CD4-positive, alpha-beta T cell (primary cell): ENCODE measurements at regions of chr4 and their contacts with region 1.

Region 1: GRCh38 chr4:76179398-76180318 is 31.5 kb upstream of the NUP54 start:
- DNase-seq: peak; percentile 71 to 89 (median 77)
- ATAC-seq: peak; percentile 92
- H3K4me3 ChIP-seq: no peak overlapping the region
- H3K4me3 Mint-ChIP-seq: no peak overlapping the region
- H3K27ac ChIP-seq: no peak overlapping the region
- H3K27ac Mint-ChIP-seq: no peak overlapping the region
- H3K4me1 ChIP-seq: no peaks in the 10 kb centered on the region
- H3K4me1 Mint-ChIP-seq: no peaks in the 10 kb centered on the region
- H3K27me3 ChIP-seq: no peaks in the 10 kb centered on the region
- H3K27me3 Mint-ChIP-seq: no peaks in the 10 kb centered on the region
- CTCF ChIP-seq: peak; percentile 94

Region 2: DNA sequence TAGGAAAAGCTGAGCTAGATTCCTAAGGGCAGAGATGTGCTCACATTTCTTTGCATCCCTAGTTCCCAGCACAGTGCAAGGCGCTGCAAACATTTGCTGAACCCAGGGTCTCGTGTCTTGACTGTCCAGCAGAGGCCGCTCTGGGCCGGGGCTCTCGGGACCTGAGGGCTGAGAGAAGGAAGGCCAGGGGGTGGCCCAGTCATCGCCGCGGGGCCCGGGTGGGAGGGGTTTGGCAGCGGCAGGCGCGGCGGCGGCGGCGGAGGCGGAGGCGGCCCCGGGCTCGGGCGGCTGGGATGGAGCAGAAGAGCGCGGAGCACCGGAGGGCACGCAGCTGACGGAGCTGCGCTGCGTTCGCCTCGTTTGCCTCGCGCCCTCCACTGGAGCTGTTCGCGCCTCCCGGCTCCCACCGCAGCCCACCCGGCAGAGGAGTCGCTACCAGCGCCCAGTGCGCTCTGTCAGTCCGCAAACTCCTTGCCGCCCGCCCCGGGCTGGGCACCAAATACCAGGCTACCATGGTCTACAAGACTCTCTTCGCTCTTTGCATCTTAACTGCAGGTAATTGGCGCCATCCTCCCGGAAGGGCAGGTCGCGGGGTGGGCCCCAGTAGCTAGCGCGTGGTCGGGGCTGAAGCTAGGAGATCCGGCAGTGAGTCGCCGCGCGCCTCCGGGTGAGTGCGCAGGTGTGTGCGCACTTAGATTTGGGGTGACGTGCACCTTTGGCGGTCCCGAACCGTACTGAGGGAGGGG is 1246.7 kb before region 1 on chr4 and contains the start of gene PARM1:
- CTCF ChIA-PET with region 1: no interaction called
- POLR2A ChIA-PET with region 1: no interaction called
- intact Hi-C with region 1: no loop called
- DNase-seq: peak in 4 of 14 experiments; percentile 5 to 43 (median 22)
- ATAC-seq: no peak
- H3K4me3 ChIP-seq: no peak within 1 kb of the TSS
- H3K4me3 Mint-ChIP-seq: no peak within 1 kb of the TSS
- H3K27ac ChIP-seq: no peak within 1 kb of the TSS
- H3K27ac Mint-ChIP-seq: no peak within 1 kb of the TSS
- H3K4me1 ChIP-seq: peaks cover 4% of the 10 kb centered on the region
- H3K4me1 Mint-ChIP-seq: peaks cover 9% of the 10 kb centered on the region
- H3K27me3 ChIP-seq: peaks cover 43 to 59% of the 10 kb centered on the region in 2 experiments
- H3K27me3 Mint-ChIP-seq: peaks cover 86% of the 10 kb centered on the region
- CTCF ChIP-seq: no peak
- total RNA-seq, gene PARM1: 0.05 to 0.06 TPM

Region 3: GRCh38 chr4:76251441-76252270 is 72.0 kb after region 1 on chr4 and contains the start of gene FAM47E:
- CTCF ChIA-PET with region 1: interaction called, 3 read pairs
- POLR2A ChIA-PET with region 1: interaction called, 4 read pairs
- intact Hi-C with region 1: loop called (anchors 5 to 10 kb)
- DNase-seq: peak in 11 of 14 experiments; percentile 1 to 61 (median 19)
- ATAC-seq: peak; percentile 39
- H3K4me3 ChIP-seq: peak within 1 kb of the TSS; percentile 49
- H3K4me3 Mint-ChIP-seq: peak within 1 kb of the TSS; percentile 75
- H3K27ac ChIP-seq: no peak within 1 kb of the TSS
- H3K27ac Mint-ChIP-seq: no peak within 1 kb of the TSS
- H3K4me1 ChIP-seq: peaks cover 10% of the 10 kb centered on the region
- H3K4me1 Mint-ChIP-seq: peaks cover 7% of the 10 kb centered on the region
- H3K27me3 ChIP-seq: peaks cover 16 to 63% of the 10 kb centered on the region in 2 experiments
- H3K27me3 Mint-ChIP-seq: peaks cover 86% of the 10 kb centered on the region
- CTCF ChIP-seq: peak; percentile 48
- total RNA-seq, gene FAM47E: 0.34 to 0.74 TPM

Region 4: GRCh38 chr4:76377911-76378310 is 198.3 kb after region 1 on chr4:
- CTCF ChIA-PET with region 1: interaction called, 30 read pairs
- POLR2A ChIA-PET with region 1: interaction called, 3 read pairs
- intact Hi-C with region 1: loop called (anchors 1 to 2 kb)
- DNase-seq: peak; percentile 6 to 64 (median 30)
- ATAC-seq: no peak
- H3K4me3 ChIP-seq: no peak overlapping the region
- H3K4me3 Mint-ChIP-seq: no peak overlapping the region
- H3K27ac ChIP-seq: no peak overlapping the region
- H3K27ac Mint-ChIP-seq: no peak overlapping the region
- H3K4me1 ChIP-seq: no peaks in the 10 kb centered on the region
- H3K4me1 Mint-ChIP-seq: no peaks in the 10 kb centered on the region
- H3K27me3 ChIP-seq: no peaks in the 10 kb centered on the region
- H3K27me3 Mint-ChIP-seq: no peaks in the 10 kb centered on the region
- CTCF ChIP-seq: no peak